ENCODE measurements at regions of chr11 and their contacts with region 1.

Region 1: DNA sequence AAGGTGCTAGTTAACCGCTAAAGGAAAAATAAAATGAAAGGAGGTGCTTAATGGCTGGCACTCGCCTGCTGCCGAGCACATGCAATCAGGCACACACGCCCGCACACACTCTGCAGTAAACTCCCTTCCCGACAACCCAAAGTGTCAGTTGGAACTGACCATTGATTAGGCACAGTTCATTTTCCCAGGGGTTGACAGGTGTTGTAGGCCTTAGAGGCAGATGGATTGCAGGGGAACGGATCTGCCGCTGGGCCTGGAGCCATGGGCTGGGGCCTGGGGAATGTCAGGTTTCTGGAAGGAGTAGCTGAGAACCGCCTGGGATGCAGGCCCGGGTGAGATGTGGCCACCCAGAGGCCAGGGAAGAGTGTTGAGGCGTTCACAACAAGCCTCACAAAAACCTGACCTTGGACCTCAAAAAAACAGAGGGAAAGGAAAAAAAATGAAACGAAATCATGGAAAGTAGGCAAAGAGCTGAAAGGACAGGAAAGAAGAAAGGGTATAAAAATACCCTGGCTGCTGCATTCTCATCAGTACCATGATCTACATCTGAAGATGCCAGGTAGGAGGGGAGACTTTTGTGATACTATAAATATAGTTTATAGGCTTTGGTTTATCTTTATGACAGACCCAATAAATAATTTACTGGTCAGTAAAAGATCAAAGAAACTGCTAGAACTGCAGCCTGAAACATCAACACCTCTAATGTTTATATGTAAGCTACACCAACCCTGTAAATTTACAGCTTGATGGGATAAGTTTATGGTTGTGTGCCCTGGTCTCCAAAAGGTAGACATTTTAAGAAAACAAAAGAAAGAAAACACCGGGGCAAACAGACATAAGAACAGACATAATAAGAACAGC is 313.4 kb downstream of the BUD13 start:
- DNase-seq: peak; percentile 30
- H3K4me3 ChIP-seq: no peak overlapping the region
- H3K27ac ChIP-seq: peak overlapping the region; percentile 9 to 80 (median 58)
- H3K4me1 ChIP-seq: peaks cover 15 to 42% (median 23%) of the 10 kb centered on the region in 4 donors
- H3K27me3 ChIP-seq: no peaks in the 10 kb centered on the region
- CTCF ChIP-seq: no peak
- EP300 ChIP-seq: no peak
- POLR2A ChIP-seq: no peak

Region 2: GRCh38 chr11:116980136-116980793 is 520.9 kb after region 1 on chr11:
- in situ Hi-C with region 1: no loop called
- intact Hi-C with region 1: loop called (anchors 5 kb)
- DNase-seq: no peak
- H3K4me3 ChIP-seq: no peak overlapping the region
- H3K27ac ChIP-seq: peak overlapping the region in 2 of 4 donors; percentile 37 to 42
- H3K4me1 ChIP-seq: peaks cover 0 to 27% (median under 1%) of the 10 kb centered on the region in 4 donors
- H3K27me3 ChIP-seq: no peaks in the 10 kb centered on the region
- CTCF ChIP-seq: no peak
- EP300 ChIP-seq: no peak
- POLR2A ChIP-seq: no peak

Measured in transverse colon (tissue), 4 donors.